PC-9 (cell line): ENCODE measurements at regions of chr7 and their contacts with region 1.

Region 1: GRCh38 chr7:75957012-75957736 is 37.2 kb downstream of the TMEM120A start:
- DNase-seq: peak; percentile 94 to 99
- H3K4me3 ChIP-seq: peak overlapping the region; percentile 36; the same call in 1 of the 2 replicates
- H3K27ac ChIP-seq: peak overlapping the region; percentile 76
- H3K4me1 ChIP-seq: peaks cover 40% of the 10 kb centered on the region
- H3K27me3 ChIP-seq: no peaks in the 10 kb centered on the region
- CTCF ChIP-seq: no peak

Region 2: DNA sequence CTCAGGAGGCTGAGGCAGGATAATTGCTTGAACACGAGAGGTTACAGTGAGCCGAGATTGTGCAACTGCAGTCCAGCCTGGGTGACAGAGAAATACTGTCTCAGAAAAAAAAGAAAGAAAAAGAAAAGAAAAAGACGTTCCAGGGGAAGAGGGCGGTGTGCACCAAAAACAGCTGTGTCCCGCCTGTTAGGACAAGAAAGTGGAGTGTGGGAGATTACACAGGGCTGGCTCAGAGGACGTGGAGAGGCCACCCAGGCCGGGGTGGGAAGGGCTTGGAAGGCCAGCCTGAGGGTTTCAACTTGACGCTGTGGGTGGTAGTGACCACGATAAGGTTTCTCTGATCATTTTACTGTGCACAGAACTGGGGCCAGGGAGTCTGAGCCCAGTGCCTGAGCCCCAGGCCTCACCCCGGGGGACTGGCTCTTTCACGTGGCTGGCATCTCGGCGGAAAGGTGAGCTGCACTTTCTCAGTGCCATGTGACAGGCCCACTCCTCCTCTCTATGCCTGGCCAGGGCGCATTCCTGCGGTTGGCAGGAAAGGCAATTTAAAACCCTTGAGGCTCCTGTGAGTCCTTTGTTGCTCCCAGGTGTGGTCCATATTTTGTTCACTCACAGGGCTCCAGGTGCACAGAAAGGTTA is 64.4 kb before region 1 on chr7:
- CTCF ChIA-PET with region 1: interaction called, 5 read pairs
- POLR2A ChIA-PET with region 1: no interaction called
- intact Hi-C with region 1: loop called (anchors 2 kb)
- DNase-seq: peak; percentile 94 to 95
- H3K4me3 ChIP-seq: no peak overlapping the region
- H3K27ac ChIP-seq: peak overlapping the region; percentile 92
- H3K4me1 ChIP-seq: peaks cover 43% of the 10 kb centered on the region
- H3K27me3 ChIP-seq: no peaks in the 10 kb centered on the region
- CTCF ChIP-seq: no peak

Region 3: DNA sequence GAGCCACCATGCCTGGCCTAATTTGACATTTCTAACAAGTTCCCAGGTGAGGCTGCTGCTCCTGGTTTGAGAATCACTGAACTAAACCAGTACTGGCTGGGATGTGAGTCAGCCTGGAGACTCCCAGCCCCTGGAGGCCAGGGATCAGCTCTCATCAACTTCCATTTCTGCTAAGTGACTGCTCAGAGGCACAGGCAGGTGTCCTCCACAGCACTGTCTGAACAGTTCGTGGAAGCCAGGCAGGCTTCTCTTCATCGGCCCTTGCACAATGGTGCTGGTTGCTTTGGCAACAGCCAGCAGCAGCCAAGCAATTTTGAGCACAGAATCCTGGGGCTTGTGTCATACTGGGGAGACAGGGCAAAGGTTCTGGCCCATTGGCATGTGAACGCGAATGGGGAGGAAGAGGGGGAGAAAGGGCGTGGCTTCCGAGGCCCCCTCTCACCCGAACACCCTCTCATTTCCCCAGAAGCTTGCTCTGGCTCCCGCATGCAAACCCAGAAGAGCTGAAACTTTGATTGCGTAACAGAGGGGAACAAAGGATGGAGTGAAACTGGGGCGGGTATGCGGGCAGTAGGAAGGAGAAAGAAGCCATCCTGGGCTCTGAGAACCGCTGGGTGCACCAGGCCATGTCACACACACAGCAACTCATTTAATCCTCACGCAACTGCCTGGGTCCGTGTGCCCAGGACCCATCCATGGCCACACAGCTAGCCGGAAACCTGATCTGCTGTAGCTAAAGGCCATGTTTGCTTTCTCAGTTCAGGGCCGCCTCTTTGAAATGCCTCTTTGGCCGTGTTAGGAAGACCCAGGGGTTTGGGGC is 51.2 kb before region 1 on chr7:
- CTCF ChIA-PET with region 1: no interaction called
- POLR2A ChIA-PET with region 1: interaction called, 21 read pairs
- intact Hi-C with region 1: no loop called
- DNase-seq: peak; percentile 77 to 92
- H3K4me3 ChIP-seq: no peak overlapping the region
- H3K27ac ChIP-seq: peak overlapping the region; percentile 56
- H3K4me1 ChIP-seq: peaks cover 17% of the 10 kb centered on the region
- H3K27me3 ChIP-seq: no peaks in the 10 kb centered on the region
- CTCF ChIP-seq: no peak

Region 4: GRCh38 chr7:75945297-75946168 is 11.6 kb before region 1 on chr7:
- CTCF ChIA-PET with region 1: interaction called, 16 read pairs
- POLR2A ChIA-PET with region 1: no interaction called
- intact Hi-C with region 1: no loop called
- DNase-seq: peak; percentile 50 to 92
- H3K4me3 ChIP-seq: no peak overlapping the region
- H3K27ac ChIP-seq: peak overlapping the region; percentile 83
- H3K4me1 ChIP-seq: peaks cover 39% of the 10 kb centered on the region
- H3K27me3 ChIP-seq: no peaks in the 10 kb centered on the region
- CTCF ChIP-seq: no peak; the same call in 1 of the 2 replicates